Testis (tissue), 5 donors: ENCODE measurements at regions of chr1 and their contacts with region 1.

Region 1: GRCh38 chr1:78617615-78618026 is 2.6 kb upstream of the IFI44L start:
- DNase-seq: peak; percentile 87
- H3K4me3 ChIP-seq: no peak overlapping the region
- H3K27ac ChIP-seq: no peak overlapping the region
- H3K4me1 ChIP-seq: peaks cover 12% of the 10 kb centered on the region
- H3K27me3 ChIP-seq: no peaks in the 10 kb centered on the region
- CTCF ChIP-seq: peak; percentile 92 to 96 (median 92)
- POLR2A ChIP-seq: no peak

Region 2: GRCh38 chr1:78676347-78676982 is 58.8 kb after region 1 on chr1:
- intact Hi-C with region 1: loop called (anchors 10 kb)
- DNase-seq: peak; percentile 86
- H3K4me3 ChIP-seq: no peak overlapping the region
- H3K27ac ChIP-seq: no peak overlapping the region
- H3K4me1 ChIP-seq: no peaks in the 10 kb centered on the region
- H3K27me3 ChIP-seq: no peaks in the 10 kb centered on the region
- CTCF ChIP-seq: peak; percentile 73 to 95 (median 83)
- POLR2A ChIP-seq: no peak